Caco-2 (cell line): ENCODE measurements at regions of chr12 and their contacts with region 1.

Region 1: DNA sequence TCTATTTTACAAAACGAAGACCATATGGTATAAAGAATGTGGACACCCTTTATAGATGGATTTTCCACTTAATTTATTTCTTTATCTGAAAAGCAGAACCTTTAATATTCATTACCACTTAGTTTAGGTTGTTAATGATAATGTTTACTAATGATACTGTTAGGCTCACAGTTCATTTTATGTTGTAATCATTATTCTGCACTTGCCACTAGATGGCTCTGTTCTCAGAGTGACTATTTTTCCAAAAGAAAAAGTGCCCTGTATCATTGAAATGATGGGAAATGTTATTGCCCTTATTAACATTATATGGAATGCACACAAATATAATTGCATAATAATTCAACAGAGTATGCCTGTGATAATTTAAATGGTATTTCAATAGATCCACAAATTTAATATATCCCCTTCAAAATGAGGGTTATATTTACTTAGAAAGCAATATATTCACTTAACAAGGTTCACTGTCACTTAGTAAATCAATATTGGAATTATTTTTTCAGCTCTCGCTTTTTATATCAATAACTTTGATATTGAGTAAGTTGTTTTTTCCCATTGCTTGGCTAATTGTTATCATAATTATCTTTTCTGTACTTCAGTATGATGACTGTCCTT is 95.7 kb downstream of the PDE3A start:
- DNase-seq: peak in 1 of 2 experiments; percentile 32
- H3K4me3 ChIP-seq: no peak overlapping the region
- H3K4me3 Mint-ChIP-seq: no peak overlapping the region
- H3K27ac Mint-ChIP-seq: no peak overlapping the region
- H3K4me1 ChIP-seq: peaks cover 4% of the 10 kb centered on the region; the same call in 1 of the 2 replicates
- H3K4me1 Mint-ChIP-seq: peaks cover 7% of the 10 kb centered on the region
- H3K27me3 ChIP-seq: no peaks in the 10 kb centered on the region
- H3K27me3 Mint-ChIP-seq: no peaks in the 10 kb centered on the region
- CTCF ChIP-seq: peak; percentile 52 to 74

Region 2: DNA sequence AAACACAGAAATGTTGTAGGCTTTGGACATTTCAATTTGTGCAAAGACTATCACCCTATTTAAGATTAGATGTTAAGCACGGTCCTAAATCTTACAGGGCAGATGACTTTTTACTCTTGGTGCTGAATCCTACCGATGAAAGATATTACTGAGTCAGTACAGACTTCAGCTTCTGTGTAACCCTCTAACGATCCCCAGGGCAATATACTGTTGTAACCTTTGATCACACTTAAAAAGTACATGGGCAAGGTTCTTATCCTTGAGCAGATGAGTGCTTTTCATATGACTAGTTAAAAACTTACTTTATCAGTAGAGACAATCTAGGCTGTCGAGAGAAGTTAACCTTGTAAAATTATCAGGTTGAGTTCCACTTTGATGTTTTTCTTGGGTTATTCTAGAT is 73.2 kb before region 1 on chr12:
- CTCF ChIA-PET with region 1: no interaction called
- POLR2A ChIA-PET with region 1: no interaction called
- intact Hi-C with region 1: no loop called
- DNase-seq: no peak
- H3K4me3 ChIP-seq: no peak overlapping the region
- H3K4me3 Mint-ChIP-seq: no peak overlapping the region
- H3K27ac Mint-ChIP-seq: no peak overlapping the region
- H3K4me1 ChIP-seq: 0 out of 2 replicates have a peak, but pooled peaks cover 5% of the 10 kb centered on the region
- H3K4me1 Mint-ChIP-seq: no peaks in the 10 kb centered on the region
- H3K27me3 ChIP-seq: no peaks in the 10 kb centered on the region
- H3K27me3 Mint-ChIP-seq: no peaks in the 10 kb centered on the region
- CTCF ChIP-seq: no peak

Region 3: DNA sequence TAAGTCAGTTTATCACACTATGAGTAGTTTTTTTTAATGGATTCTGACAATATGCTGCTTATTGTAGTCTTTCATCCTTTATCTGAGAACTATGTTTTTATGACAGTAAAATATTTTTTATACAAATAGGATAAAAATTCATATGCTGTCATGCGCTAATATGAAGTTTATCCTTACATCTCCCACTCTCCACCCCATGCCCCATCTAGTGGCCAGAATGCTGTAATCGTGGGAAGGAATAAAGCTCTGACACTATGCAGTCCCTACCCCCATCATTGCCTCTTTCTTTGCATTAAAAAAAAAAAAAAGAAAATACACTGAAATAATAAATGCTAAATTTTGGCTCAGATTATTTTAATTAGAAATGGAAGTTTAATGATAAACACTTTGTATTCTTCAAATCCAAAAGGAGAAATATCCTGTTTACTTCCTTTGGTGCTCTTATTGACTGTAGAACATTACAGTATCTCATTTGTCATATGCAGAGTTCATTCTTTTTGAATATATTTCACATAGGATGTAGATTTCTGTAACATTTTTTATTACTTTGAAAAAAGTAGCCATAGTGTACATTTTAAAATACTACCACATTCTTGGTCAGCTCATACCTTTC is 85.2 kb after region 1 on chr12:
- CTCF ChIA-PET with region 1: no interaction called
- POLR2A ChIA-PET with region 1: no interaction called
- intact Hi-C with region 1: loop called (anchors 1 kb)
- DNase-seq: peak; percentile 42 to 60
- H3K4me3 ChIP-seq: no peak overlapping the region
- H3K4me3 Mint-ChIP-seq: no peak overlapping the region
- H3K27ac Mint-ChIP-seq: no peak overlapping the region
- H3K4me1 ChIP-seq: no peaks in the 10 kb centered on the region
- H3K4me1 Mint-ChIP-seq: no peaks in the 10 kb centered on the region
- H3K27me3 ChIP-seq: no peaks in the 10 kb centered on the region
- H3K27me3 Mint-ChIP-seq: peaks cover 3% of the 10 kb centered on the region
- CTCF ChIP-seq: peak; percentile 66 to 74

Region 4: GRCh38 chr12:20601668-20602280 is 137.8 kb after region 1 on chr12:
- CTCF ChIA-PET with region 1: no interaction called
- POLR2A ChIA-PET with region 1: no interaction called
- intact Hi-C with region 1: loop called (anchors 1 kb)
- DNase-seq: peak in 1 of 2 experiments; percentile 17
- H3K4me3 ChIP-seq: no peak overlapping the region
- H3K4me3 Mint-ChIP-seq: no peak overlapping the region
- H3K27ac Mint-ChIP-seq: no peak overlapping the region
- H3K4me1 ChIP-seq: no peaks in the 10 kb centered on the region
- H3K4me1 Mint-ChIP-seq: no peaks in the 10 kb centered on the region
- H3K27me3 ChIP-seq: no peaks in the 10 kb centered on the region
- H3K27me3 Mint-ChIP-seq: peaks cover 2% of the 10 kb centered on the region
- CTCF ChIP-seq: peak; percentile 55 to 64